PC-9 (cell line): ENCODE measurements at regions of chr10 and their contacts with region 1.

Region 1: DNA sequence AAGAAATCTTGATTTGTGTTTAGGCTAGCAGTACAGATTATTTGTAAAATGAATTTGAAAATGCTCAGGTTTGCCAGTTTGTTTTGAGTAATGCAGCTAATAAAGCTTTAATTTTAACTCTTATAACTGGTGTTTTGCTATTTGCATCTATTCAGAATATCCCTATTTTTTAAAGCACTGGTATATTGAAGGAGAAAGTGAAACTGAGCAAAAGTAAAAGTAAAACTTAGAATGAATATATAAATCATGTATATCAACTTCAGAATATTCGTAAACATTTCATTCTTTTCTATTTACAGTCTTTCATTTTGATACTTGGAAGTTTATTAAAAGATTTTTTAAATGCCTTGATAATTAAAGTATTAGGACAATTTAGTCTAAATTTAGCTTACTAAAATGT is 26.2 kb downstream of the TASOR2 start:
- DNase-seq: no peak
- H3K4me3 ChIP-seq: no peak overlapping the region
- H3K27ac ChIP-seq: no peak overlapping the region
- H3K4me1 ChIP-seq: no peaks in the 10 kb centered on the region
- H3K27me3 ChIP-seq: no peaks in the 10 kb centered on the region
- CTCF ChIP-seq: no peak

Region 2: DNA sequence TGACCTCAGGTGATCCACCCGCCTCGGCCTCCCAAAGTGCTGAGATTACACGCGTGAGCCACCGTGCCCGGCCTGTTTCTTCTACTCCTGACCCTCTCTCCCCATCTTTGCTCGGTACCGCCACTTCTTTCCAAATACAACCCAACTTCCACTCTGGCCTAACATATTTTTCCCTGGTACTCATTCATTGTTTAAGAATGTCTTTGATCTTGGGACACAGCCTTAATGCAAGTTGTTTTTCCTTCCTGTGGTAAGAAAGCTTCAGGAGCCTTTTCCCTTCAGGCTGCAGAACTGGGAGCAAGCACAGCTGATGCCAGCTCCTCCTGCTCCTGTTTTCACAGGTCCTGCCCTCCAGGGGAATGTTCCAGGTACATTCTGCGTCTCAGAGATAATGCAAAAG is 172.4 kb before region 1 on chr10:
- CTCF ChIA-PET with region 1: no interaction called
- POLR2A ChIA-PET with region 1: no interaction called
- intact Hi-C with region 1: no loop called
- DNase-seq: peak; percentile 31 to 78
- H3K4me3 ChIP-seq: no peak overlapping the region
- H3K27ac ChIP-seq: peak overlapping the region; percentile 57
- H3K4me1 ChIP-seq: peaks cover 55% of the 10 kb centered on the region
- H3K27me3 ChIP-seq: no peaks in the 10 kb centered on the region
- CTCF ChIP-seq: no peak

Region 3: GRCh38 chr10:5762531-5762930 is 51.7 kb after region 1 on chr10:
- CTCF ChIA-PET with region 1: no interaction called
- POLR2A ChIA-PET with region 1: interaction called, 16 read pairs
- intact Hi-C with region 1: no loop called
- DNase-seq: no peak
- H3K4me3 ChIP-seq: no peak overlapping the region
- H3K27ac ChIP-seq: no peak overlapping the region
- H3K4me1 ChIP-seq: no peaks in the 10 kb centered on the region
- H3K27me3 ChIP-seq: no peaks in the 10 kb centered on the region
- CTCF ChIP-seq: no peak